ENCODE measurements at regions of chr3 and their contacts with region 1.

Region 1: GRCh38 chr3:9749645-9750555 is at the start of gene OGG1:
- DNase-seq: peak; percentile 98
- H3K4me3 Mint-ChIP-seq: peak within 1 kb of the TSS; percentile 83
- H3K27ac Mint-ChIP-seq: peak within 1 kb of the TSS; percentile 84
- H3K4me1 Mint-ChIP-seq: peaks cover 17% of the 10 kb centered on the region
- H3K27me3 Mint-ChIP-seq: no peaks in the 10 kb centered on the region
- CTCF ChIP-seq: no peak
- total RNA-seq, gene OGG1: 15.3 and 17.7 TPM in 2 replicates

Region 2: GRCh38 chr3:9659849-9660248 is 90.1 kb before region 1 on chr3:
- CTCF ChIA-PET with region 1: no interaction called
- POLR2A ChIA-PET with region 1: no interaction called
- intact Hi-C with region 1: no loop called
- DNase-seq: no peak
- H3K4me3 Mint-ChIP-seq: no peak overlapping the region
- H3K27ac Mint-ChIP-seq: no peak overlapping the region
- H3K4me1 Mint-ChIP-seq: no peaks in the 10 kb centered on the region
- H3K27me3 Mint-ChIP-seq: no peaks in the 10 kb centered on the region
- CTCF ChIP-seq: no peak

Region 3: GRCh38 chr3:9731206-9732079 is 18.5 kb before region 1 on chr3 and contains the start of gene BRPF1:
- CTCF ChIA-PET with region 1: interaction called, 8 read pairs
- POLR2A ChIA-PET with region 1: interaction called, 41 read pairs
- intact Hi-C with region 1: no loop called
- DNase-seq: peak; percentile 99
- H3K4me3 Mint-ChIP-seq: peak within 1 kb of the TSS; percentile 76
- H3K27ac Mint-ChIP-seq: peak within 1 kb of the TSS; percentile 98
- H3K4me1 Mint-ChIP-seq: peaks cover 35% of the 10 kb centered on the region
- H3K27me3 Mint-ChIP-seq: no peaks in the 10 kb centered on the region
- CTCF ChIP-seq: no peak
- total RNA-seq, gene BRPF1: 19.9 and 21.4 TPM in 2 replicates

Region 4: GRCh38 chr3:9765865-9766264 is 16.0 kb after region 1 on chr3:
- CTCF ChIA-PET with region 1: no interaction called
- POLR2A ChIA-PET with region 1: no interaction called
- intact Hi-C with region 1: no loop called
- DNase-seq: no peak
- H3K4me3 Mint-ChIP-seq: no peak overlapping the region
- H3K27ac Mint-ChIP-seq: no peak overlapping the region
- H3K4me1 Mint-ChIP-seq: peaks cover 7% of the 10 kb centered on the region
- H3K27me3 Mint-ChIP-seq: no peaks in the 10 kb centered on the region
- CTCF ChIP-seq: no peak